Heart left ventricle (tissue), 16 donors: ENCODE measurements at regions of chr16 and their contacts with region 1.

Region 1: DNA sequence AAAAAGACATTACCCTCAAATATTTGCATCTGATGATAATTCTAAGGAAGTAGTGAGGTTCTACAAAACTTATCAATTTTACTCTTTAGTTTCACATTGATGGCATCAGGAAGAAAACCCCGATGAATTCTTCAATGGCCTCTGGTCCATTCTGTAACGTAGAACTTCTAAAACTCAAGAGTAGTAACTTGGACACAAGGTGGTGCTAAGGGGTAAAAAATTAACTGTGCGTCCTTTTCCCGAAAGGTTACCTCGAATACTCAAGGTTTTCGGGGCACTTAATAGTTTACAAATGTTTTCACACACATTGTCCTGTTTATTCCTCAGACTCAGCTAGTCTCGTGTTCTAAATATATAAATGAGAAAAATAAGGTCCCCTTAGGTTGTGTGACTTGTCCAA is 517.3 kb upstream of the ZFHX3 start:
- DNase-seq: no peak
- ATAC-seq: no peak
- H3K4me3 ChIP-seq: no peak overlapping the region
- H3K27ac ChIP-seq: no peak overlapping the region
- H3K4me1 ChIP-seq: no peaks in the 10 kb centered on the region
- H3K27me3 ChIP-seq: peaks cover 0 to 10% (median 5%) of the 10 kb centered on the region in 9 donors
- CTCF ChIP-seq: peak in 7 of 12 donors; percentile 14 to 45 (median 39)
- POLR2A ChIP-seq: no peak

Region 2: DNA sequence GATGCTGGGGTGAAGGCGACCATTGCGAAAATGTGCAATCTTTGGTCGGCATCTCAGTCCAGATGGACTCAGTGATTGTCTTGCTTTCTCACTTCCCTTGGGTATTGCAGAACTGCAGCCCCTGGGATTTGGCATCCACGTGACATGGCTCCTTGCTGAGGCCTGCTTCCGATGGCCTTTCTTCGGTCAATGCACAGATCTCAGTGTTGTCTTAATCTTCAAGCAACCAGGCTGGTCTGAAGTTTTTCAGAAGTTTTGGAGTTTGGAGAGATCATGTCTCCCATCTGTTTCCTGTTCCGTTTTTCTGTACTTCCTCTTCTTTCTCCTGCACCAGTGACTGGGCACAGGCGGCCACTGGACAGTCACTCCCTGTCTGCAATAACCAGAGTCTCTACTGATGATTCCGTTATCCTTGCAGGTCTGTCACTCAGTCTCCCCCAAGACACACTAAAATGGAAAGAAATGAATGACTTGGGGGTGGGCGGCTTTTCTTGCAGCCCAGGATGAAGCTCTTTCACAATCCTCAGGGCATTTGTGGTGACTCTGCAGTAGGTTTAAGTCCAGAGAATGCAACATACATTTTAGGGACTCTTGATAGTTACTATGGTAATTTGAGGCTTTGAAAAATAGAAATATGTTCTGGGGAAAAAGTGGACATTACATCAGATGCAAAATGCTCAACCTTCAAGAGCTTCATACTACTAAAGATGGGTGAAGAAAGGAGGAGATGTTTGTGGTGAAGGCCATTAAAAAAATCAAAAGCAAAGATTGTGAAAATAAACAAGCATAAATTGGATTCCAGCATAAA is 411.0 kb before region 1 on chr16:
- intact Hi-C with region 1: no loop called
- DNase-seq: peak; percentile 49 to 72 (median 61)
- ATAC-seq: peak; percentile 75 to 87 (median 82)
- H3K4me3 ChIP-seq: no peak overlapping the region
- H3K27ac ChIP-seq: peak overlapping the region in 7 of 12 donors; percentile 14 to 87 (median 32)
- H3K4me1 ChIP-seq: peaks cover 0 to 68% (median 0%) of the 10 kb centered on the region in 12 donors
- H3K27me3 ChIP-seq: no peaks in the 10 kb centered on the region
- CTCF ChIP-seq: no peak
- POLR2A ChIP-seq: no peak

Region 3: DNA sequence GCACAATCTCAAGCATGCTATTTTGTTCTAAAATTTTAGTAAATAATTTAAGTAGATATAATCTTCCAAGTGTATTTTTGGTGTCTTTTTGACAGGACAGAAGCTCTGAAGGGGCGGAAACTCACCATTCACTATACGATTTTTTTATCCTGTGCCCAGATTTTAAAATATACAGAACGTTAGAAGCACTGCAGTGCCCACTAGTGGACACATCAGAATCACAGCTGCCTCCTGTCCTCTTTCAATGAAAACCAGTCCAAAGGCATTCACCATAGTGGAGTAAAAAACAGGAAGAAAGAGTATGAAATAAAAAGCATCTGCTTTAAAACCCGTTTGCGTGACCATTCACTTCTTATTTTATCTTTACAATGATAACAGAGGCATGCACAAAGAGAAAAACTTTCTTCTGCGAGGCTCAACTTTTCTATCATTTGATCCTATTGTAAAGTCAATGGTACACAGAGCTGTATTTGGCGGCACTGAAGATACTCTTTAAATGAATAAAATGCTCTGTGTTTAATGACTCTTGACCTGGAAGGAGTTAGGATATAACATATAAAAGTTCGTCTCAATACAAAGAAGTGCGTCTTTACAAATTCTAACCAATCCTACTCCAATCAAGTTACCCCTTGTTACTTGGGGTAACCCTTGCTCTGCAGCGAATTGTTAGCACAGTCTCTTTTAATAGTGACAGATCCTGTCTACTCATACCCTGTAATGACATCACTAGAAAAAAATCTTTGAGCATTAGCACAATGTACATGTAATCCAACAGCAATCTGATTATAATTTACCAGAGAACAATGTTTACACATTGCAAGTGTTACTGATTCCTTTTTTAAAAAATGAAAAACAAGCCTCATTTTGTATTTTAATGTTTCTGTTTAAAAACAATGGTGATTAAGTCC is 391.6 kb after region 1 on chr16:
- intact Hi-C with region 1: loop called in 3 of 10 experiments (anchors 5 to 10 kb)
- DNase-seq: peak in 4 of 5 donors; percentile 34 to 48 (median 46)
- ATAC-seq: peak in 1 of 4 donors; percentile 66
- H3K4me3 ChIP-seq: no peak overlapping the region
- H3K27ac ChIP-seq: no peak overlapping the region
- H3K4me1 ChIP-seq: peaks cover 0 to 5% (median 0%) of the 10 kb centered on the region in 12 donors
- H3K27me3 ChIP-seq: peaks cover 0 to 5% (median 0%) of the 10 kb centered on the region in 9 donors
- CTCF ChIP-seq: peak; percentile 73 to 89 (median 81)
- POLR2A ChIP-seq: no peak

Region 4: DNA sequence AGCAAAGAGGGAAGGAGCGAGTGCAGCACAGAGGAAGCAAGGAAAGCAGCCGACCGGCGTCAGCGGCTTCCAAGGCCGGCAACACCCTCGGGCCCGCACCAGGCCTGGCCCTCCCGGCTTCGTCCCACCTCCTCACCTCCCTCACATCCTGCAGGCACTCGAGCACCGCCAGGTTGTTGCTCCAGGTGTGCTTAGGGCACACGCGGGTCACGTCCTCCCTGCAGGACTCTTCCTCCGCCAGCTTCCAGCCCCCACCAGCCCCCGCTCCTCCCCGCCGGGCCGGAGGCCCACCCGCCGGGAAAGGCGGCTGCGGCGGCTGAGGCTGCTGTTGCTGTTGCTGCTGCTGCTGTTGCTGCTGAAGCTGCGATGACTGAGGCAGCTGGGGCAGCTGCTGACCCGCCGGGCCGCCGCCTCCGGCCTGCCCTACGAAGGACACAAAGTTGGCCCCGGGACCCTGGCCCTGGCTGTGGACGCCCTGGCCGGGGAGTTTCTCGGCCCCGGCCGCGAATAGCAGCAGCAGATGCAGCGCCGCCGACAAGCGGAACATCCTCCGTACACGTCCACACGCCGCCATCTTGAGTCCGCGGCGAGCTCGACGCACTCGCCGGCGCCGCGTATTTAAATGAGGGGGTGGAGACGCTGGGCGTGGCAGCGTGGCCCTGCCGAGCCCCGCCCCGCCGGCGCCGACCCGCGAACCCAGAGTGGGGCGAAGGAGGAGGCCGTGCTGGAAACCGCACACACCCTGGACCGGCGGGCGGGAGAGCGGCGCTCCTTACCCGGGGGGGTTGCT is 1041.5 kb after region 1 on chr16 and contains the start of gene GLG1:
- intact Hi-C with region 1: no loop called
- DNase-seq: peak; percentile 93 to 96 (median 94)
- ATAC-seq: peak; percentile 93 to 99 (median 98)
- H3K4me3 ChIP-seq: peak within 1 kb of the TSS; percentile 71 to 100 (median 94)
- H3K27ac ChIP-seq: peak within 1 kb of the TSS; percentile 76 to 98 (median 94)
- H3K4me1 ChIP-seq: peaks cover 0 to 46% (median 29%) of the 10 kb centered on the region in 12 donors
- H3K27me3 ChIP-seq: no peaks in the 10 kb centered on the region
- CTCF ChIP-seq: peak in 3 of 12 donors; percentile 9 to 29 (median 10)
- POLR2A ChIP-seq: peak; percentile 18 to 93
- total RNA-seq, gene GLG1: 86.7 to 138 (median 115) TPM